Common myeloid progenitor, CD34-positive (primary cell): ENCODE measurements at regions of chr11 and their contacts with region 1.

Region 1: GRCh38 chr11:67167086-67167485 is 48.0 kb downstream of the KDM2A start:
- DNase-seq: no peak
- H3K4me3 ChIP-seq: no peak overlapping the region
- H3K27ac ChIP-seq: peak overlapping the region in 1 of 2 experiments; percentile 6
- H3K4me1 ChIP-seq: peaks cover 0 to 17% (median 6%) of the 10 kb centered on the region in 4 experiments
- H3K27me3 ChIP-seq: no peaks in the 10 kb centered on the region

Region 2: GRCh38 chr11:67082035-67082791 is 84.9 kb before region 1 on chr11:
- CTCF ChIA-PET with region 1: interaction called, 41 read pairs
- POLR2A ChIA-PET with region 1: no interaction called
- DNase-seq: peak; percentile 26 to 36 (median 36)
- H3K4me3 ChIP-seq: peak overlapping the region in 4 of 7 experiments; percentile 13 to 64 (median 52)
- H3K27ac ChIP-seq: no peak overlapping the region
- H3K4me1 ChIP-seq: peaks cover 0 to 13% (median 11%) of the 10 kb centered on the region in 4 experiments
- H3K27me3 ChIP-seq: peaks cover 0 to 4% (median 0%) of the 10 kb centered on the region in 5 experiments